ENCODE measurements at regions of chr22 and their contacts with region 1.

Region 1: GRCh38 chr22:33579448-33580093 is 340.7 kb downstream of the LARGE1 start:
- DNase-seq: peak; percentile 81
- H3K4me3 Mint-ChIP-seq: no peak overlapping the region
- H3K27ac Mint-ChIP-seq: peak overlapping the region; percentile 36
- H3K4me1 Mint-ChIP-seq: peaks cover 27% of the 10 kb centered on the region
- H3K27me3 Mint-ChIP-seq: no peaks in the 10 kb centered on the region
- CTCF ChIP-seq: peak; percentile 94

Region 2: GRCh38 chr22:33519071-33519973 is 60.2 kb before region 1 on chr22:
- CTCF ChIA-PET with region 1: interaction called, 13 read pairs
- intact Hi-C with region 1: loop called (anchors 1 kb)
- DNase-seq: peak; percentile 52
- H3K4me3 Mint-ChIP-seq: no peak overlapping the region
- H3K27ac Mint-ChIP-seq: no peak overlapping the region
- H3K4me1 Mint-ChIP-seq: peaks cover 34% of the 10 kb centered on the region
- H3K27me3 Mint-ChIP-seq: no peaks in the 10 kb centered on the region
- CTCF ChIP-seq: peak; percentile 58

Region 3: GRCh38 chr22:33652615-33653014 is 73.0 kb after region 1 on chr22:
- CTCF ChIA-PET with region 1: no interaction called
- intact Hi-C with region 1: no loop called
- DNase-seq: no peak
- H3K4me3 Mint-ChIP-seq: no peak overlapping the region
- H3K27ac Mint-ChIP-seq: no peak overlapping the region
- H3K4me1 Mint-ChIP-seq: no peaks in the 10 kb centered on the region
- H3K27me3 Mint-ChIP-seq: no peaks in the 10 kb centered on the region
- CTCF ChIP-seq: no peak

Region 4: DNA sequence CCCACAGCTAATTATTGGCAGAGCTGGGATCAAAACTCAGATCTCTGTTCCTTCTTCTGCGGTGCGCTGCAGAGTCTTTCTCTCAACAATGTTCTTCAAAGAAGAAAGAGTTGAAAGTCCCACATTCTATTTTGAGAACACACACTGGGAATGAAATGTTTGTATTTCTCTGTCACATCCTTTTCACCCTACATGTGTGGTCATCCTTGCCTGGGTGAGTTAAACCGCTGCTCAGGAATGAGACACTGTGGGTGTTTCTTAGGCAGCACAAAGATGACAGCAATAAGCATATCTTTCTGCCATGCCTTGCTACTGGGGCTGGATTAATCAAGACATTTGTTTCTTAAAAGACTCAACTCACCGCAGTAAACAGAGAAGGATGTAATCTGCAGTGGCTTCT is 118.1 kb after region 1 on chr22:
- CTCF ChIA-PET with region 1: no interaction called
- intact Hi-C with region 1: no loop called
- DNase-seq: no peak
- H3K4me3 Mint-ChIP-seq: no peak overlapping the region
- H3K27ac Mint-ChIP-seq: no peak overlapping the region
- H3K4me1 Mint-ChIP-seq: no peaks in the 10 kb centered on the region
- H3K27me3 Mint-ChIP-seq: no peaks in the 10 kb centered on the region
- CTCF ChIP-seq: no peak

Region 5: DNA sequence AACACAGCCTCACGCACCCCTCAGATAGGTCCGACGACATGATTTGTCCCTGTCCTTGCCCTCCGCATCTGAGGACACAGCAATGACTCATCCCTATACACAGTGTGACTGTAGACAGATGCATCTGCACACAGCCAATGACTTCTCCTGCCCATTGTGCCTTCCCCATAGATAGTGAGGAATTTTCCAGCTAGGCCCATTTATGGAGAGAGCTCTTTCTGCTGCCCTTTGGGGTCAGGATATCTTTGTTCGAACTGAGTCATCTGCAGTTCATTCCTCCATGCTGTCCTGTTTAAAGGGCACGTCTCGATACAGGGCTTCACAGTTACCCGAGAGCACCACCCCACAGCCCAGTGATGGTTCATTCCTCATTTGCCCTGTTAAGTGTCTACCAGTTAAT is 244.0 kb after region 1 on chr22:
- CTCF ChIA-PET with region 1: no interaction called
- intact Hi-C with region 1: no loop called
- DNase-seq: no peak
- H3K4me3 Mint-ChIP-seq: no peak overlapping the region
- H3K27ac Mint-ChIP-seq: no peak overlapping the region
- H3K4me1 Mint-ChIP-seq: no peaks in the 10 kb centered on the region
- H3K27me3 Mint-ChIP-seq: no peaks in the 10 kb centered on the region
- CTCF ChIP-seq: no peak